Breast epithelium (tissue), 4 donors: ENCODE measurements at regions of chr12 and their contacts with region 1.

Region 1: GRCh38 chr12:116525418-116526001 is 33.7 kb upstream of the MAP1LC3B2 start:
- DNase-seq: peak; percentile 69 to 86
- H3K4me3 ChIP-seq: peak overlapping the region in 2 of 3 donors; percentile 21 to 34
- H3K27ac ChIP-seq: peak overlapping the region; percentile 80
- H3K4me1 ChIP-seq: peaks cover 4% of the 10 kb centered on the region in 2 donors
- H3K27me3 ChIP-seq: no peaks in the 10 kb centered on the region
- CTCF ChIP-seq: no peak
- POLR2A ChIP-seq: no peak

Region 2: DNA sequence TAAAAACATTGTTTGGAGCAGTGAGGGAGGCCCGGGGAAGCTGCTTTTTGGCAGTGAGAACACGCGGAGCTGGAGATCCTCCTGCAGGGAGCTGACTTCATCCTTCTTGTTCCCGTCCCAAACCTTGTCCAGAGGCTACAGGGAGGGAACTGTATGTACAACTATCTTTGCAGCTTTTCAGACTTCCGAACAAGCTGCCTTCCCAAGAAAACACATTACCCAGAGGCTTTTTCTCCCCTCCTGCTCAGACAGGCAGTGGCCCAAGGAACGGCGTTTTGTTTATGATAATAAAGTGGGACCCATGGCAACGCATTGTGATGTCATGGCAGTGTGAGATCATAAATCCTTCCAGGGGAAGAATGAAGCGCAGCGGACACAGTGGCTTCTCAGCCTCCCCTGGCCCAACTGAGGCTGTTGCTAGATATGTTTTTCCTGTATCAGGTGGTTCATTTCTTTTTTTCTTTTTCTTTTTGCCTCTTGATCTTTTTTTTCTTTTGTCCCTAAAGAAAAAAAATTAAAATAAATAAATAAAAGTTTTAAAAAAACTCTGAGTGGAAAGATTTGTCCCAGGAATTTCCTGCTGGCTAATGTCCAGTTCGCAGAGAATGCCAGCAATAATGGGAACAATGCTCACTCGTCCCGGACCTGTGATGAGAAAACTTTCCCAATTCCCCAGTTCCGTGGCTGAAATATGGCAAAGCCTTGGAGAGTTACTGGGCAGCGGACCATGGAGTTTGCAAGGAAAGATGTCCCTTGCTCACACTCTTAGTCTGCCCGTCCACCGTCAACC is 69.8 kb before region 1 on chr12:
- intact Hi-C with region 1: loop called (anchors 10 kb)
- DNase-seq: peak; percentile 75 to 93
- H3K4me3 ChIP-seq: peak overlapping the region; percentile 7 to 27 (median 12)
- H3K27ac ChIP-seq: peak overlapping the region; percentile 88 to 90
- H3K4me1 ChIP-seq: peaks cover 0 to 12% of the 10 kb centered on the region in 2 donors
- H3K27me3 ChIP-seq: no peaks in the 10 kb centered on the region
- CTCF ChIP-seq: no peak
- POLR2A ChIP-seq: no peak

Region 3: GRCh38 chr12:116559162-116559935 is 33.8 kb after region 1 on chr12 and contains the start of gene MAP1LC3B2:
- intact Hi-C with region 1: loop called (anchors 1 kb)
- DNase-seq: peak in 1 of 2 donors; percentile 79
- H3K4me3 ChIP-seq: peak within 1 kb of the TSS in 2 of 3 donors; percentile 13 to 44
- H3K27ac ChIP-seq: peak within 1 kb of the TSS; percentile 87
- H3K4me1 ChIP-seq: peaks cover 3 to 5% of the 10 kb centered on the region in 2 donors
- H3K27me3 ChIP-seq: no peaks in the 10 kb centered on the region
- CTCF ChIP-seq: no peak
- POLR2A ChIP-seq: no peak
- total RNA-seq, gene MAP1LC3B2: 0.98 to 8.5 (median 1.1) TPM

Region 4: DNA sequence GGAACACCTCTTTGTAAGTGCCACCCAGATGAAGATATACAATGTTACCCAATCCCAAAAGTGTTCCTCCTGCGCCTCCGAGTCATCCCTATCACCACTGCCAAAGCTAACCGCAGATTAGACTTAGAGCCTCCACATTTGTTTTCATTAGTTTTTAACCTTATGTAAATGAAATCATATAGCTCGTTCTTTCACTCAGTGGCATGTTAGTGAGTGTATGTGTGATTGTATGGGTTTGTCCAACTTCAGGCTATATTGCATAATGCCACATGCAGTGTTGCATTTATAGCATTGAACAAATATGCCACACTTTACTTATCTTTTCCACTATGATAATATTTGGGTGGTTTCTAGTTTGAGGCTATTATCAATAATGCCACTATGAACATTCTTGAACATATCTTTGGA is 51.6 kb after region 1 on chr12:
- intact Hi-C with region 1: no loop called
- DNase-seq: no peak
- H3K4me3 ChIP-seq: no peak overlapping the region
- H3K27ac ChIP-seq: no peak overlapping the region
- H3K4me1 ChIP-seq: no peaks in the 10 kb centered on the region
- H3K27me3 ChIP-seq: no peaks in the 10 kb centered on the region
- CTCF ChIP-seq: no peak
- POLR2A ChIP-seq: no peak